PC-3 (cell line): ENCODE measurements at regions of chr2 and their contacts with region 1.

Region 1: GRCh38 chr2:68751397-68752339 is 17.1 kb downstream of the ARHGAP25 start:
- DNase-seq: peak; percentile 95
- ATAC-seq: peak; percentile 99
- H3K4me3 ChIP-seq: no peak overlapping the region
- H3K27ac ChIP-seq: no peak overlapping the region
- H3K4me1 ChIP-seq: no peaks in the 10 kb centered on the region
- H3K27me3 ChIP-seq: no peaks in the 10 kb centered on the region
- CTCF ChIP-seq: peak; percentile 94

Region 2: DNA sequence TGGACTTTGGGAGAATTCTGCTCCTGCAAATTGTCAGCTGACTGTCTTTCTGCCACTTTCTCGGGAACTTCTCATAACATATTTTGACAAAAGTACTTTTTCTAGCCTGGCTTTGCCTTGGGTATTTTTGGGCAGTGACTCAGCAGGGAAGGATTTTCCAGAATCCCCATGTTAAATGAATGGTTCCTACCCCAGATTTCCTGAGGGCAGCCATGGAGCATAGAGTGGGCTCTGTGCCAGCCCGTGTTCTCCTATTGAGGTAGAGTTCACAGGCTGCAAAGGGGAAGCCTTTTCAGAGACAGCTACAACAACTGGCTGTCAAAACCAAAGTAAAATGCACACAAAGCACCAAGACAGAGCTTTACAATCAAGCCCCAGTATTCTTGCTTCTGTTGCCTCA is 59.7 kb after region 1 on chr2:
- CTCF ChIA-PET with region 1: no interaction called
- POLR2A ChIA-PET with region 1: no interaction called
- intact Hi-C with region 1: no loop called
- DNase-seq: peak; percentile 30
- ATAC-seq: no peak
- H3K4me3 ChIP-seq: no peak overlapping the region
- H3K27ac ChIP-seq: no peak overlapping the region
- H3K4me1 ChIP-seq: 0 out of 2 replicates have a peak, but pooled peaks cover 10% of the 10 kb centered on the region
- H3K27me3 ChIP-seq: no peaks in the 10 kb centered on the region
- CTCF ChIP-seq: no peak

Region 3: DNA sequence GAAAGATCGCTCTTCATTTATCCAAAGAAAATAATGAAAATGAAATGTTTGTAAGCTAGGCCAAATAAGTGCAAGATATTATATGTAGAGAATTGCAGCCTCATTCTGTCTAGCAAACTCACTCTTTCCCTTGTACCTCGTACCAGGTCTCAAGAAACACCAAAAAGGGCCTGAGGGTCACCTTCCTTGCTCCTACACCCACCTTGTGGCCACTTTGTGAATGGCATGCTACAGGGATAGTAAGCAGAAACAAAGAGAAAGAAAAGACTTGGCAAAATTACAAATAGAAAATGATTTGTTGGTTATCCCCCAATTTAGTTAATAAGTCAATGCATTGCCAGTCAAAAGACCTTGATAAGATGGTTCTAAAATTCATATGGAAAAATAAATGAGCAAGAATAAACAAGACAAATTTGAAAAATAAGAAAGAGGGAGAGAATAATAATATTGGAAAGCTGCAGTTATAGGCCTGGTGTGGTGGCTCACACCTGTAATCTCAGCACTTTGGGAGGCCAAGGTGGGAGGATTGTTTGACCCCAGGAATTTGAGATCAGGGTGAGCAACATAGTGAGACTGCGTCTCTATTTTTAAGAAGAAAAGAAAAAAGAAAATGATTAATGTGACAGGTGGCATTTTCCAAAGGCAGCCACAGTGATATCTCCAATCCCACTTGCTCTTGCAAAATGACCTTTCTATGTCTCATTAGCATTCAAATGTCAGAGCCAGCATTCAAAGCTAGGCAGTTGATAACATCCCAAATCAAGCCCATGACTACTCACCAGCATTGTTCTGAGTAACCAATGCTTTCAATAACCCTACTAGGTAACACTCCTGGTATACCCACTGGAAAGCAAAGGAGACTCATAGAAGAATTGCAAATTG is 158.4 kb after region 1 on chr2:
- CTCF ChIA-PET with region 1: interaction called, 5 read pairs
- POLR2A ChIA-PET with region 1: no interaction called
- intact Hi-C with region 1: loop called (anchors 1 kb)
- DNase-seq: peak; percentile 88
- ATAC-seq: no peak
- H3K4me3 ChIP-seq: no peak overlapping the region
- H3K27ac ChIP-seq: no peak overlapping the region
- H3K4me1 ChIP-seq: peaks cover 29% of the 10 kb centered on the region
- H3K27me3 ChIP-seq: no peaks in the 10 kb centered on the region
- CTCF ChIP-seq: peak; percentile 89

Region 4: GRCh38 chr2:68925295-68925896 is 173.7 kb after region 1 on chr2:
- CTCF ChIA-PET with region 1: interaction called, 23 read pairs
- POLR2A ChIA-PET with region 1: no interaction called
- intact Hi-C with region 1: loop called (anchors 1 kb)
- DNase-seq: peak; percentile 81
- ATAC-seq: peak; percentile 84
- H3K4me3 ChIP-seq: no peak overlapping the region
- H3K27ac ChIP-seq: no peak overlapping the region
- H3K4me1 ChIP-seq: no peaks in the 10 kb centered on the region; the same call in 1 of the 2 replicates
- H3K27me3 ChIP-seq: no peaks in the 10 kb centered on the region
- CTCF ChIP-seq: peak; percentile 93